Activated T-helper 2 cell treated with anti-CD3 and anti-CD28 coated beads, Interferon-gamma antibody, Interleukin-2, Interleukin-4, amounts not matched to agents 10 μg/mL and 5 μg/mL and 100 μg/mL, durations not matched to agents 14 hours and 24 hours and 36 hours (primary cell): ENCODE measurements at regions of chr16 and their contacts with region 1.

Region 1: DNA sequence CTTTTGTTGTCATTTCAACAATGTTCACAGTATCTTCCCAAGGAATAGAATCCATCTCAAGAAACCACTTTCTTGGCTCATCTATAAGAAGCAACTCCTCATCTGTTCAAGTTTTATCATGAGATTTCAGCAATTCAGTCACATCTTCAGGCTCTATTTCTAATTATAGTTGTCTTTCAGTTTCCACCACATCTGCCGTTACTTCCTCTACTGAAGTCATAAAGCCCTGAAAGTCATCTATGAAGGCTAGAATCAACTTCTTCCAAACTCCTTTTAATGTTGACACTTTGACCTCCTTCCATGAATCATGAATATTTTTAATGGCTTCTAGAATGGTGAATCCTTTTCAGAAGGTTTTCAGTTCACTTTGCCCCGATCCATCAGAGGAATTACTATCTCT is 102.1 kb downstream of the CDH13 start:
- DNase-seq: no peak
- H3K4me3 Mint-ChIP-seq: no peak overlapping the region
- H3K27ac Mint-ChIP-seq: no peak overlapping the region
- H3K4me1 Mint-ChIP-seq: peaks cover 5% of the 10 kb centered on the region
- H3K27me3 Mint-ChIP-seq: peaks cover 2% of the 10 kb centered on the region

Region 2: GRCh38 chr16:82801361-82801760 is 72.5 kb after region 1 on chr16:
- intact Hi-C with region 1: loop called (anchors 5 kb)
- DNase-seq: no peak
- H3K4me3 Mint-ChIP-seq: no peak overlapping the region
- H3K27ac Mint-ChIP-seq: no peak overlapping the region
- H3K4me1 Mint-ChIP-seq: peaks cover 8% of the 10 kb centered on the region
- H3K27me3 Mint-ChIP-seq: peaks cover 3% of the 10 kb centered on the region

Region 3: GRCh38 chr16:82954224-82954929 is 225.5 kb after region 1 on chr16:
- intact Hi-C with region 1: no loop called
- DNase-seq: no peak
- H3K4me3 Mint-ChIP-seq: no peak overlapping the region
- H3K27ac Mint-ChIP-seq: no peak overlapping the region
- H3K4me1 Mint-ChIP-seq: no peaks in the 10 kb centered on the region
- H3K27me3 Mint-ChIP-seq: no peaks in the 10 kb centered on the region